ENCODE measurements at regions of chr7 and their contacts with region 1.

Region 1: DNA sequence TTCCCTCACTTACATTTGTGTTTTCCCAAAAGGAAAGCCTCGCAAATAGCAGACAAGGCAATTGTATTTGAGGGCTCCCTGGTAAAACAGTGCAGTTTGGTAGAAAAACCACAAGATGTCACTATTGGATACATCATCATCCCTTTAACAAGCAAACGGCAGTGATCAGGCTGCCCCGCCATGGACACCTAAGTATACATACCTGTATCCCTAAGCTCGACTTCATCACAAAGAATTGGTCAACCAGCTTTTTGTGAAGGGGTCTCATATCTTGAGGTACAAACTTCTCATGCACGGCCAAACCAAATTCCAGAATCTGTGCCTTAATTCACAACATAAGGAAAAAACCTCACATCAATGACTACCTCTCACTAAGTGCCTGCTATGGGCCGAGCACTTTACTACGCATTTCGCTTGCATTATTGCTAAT is 179.5 kb upstream of the IMMP2L start:
- DNase-seq: peak; percentile 66
- CTCF ChIP-seq: peak; percentile 66

Region 2: GRCh38 chr7:111730476-111731300 is 11.1 kb before region 1 on chr7:
- CTCF ChIA-PET with region 1: interaction called, 13 read pairs
- POLR2A ChIA-PET with region 1: no interaction called
- DNase-seq: peak; percentile 44
- CTCF ChIP-seq: peak; percentile 49

Measured in GM10248 (cell line).